CD8-positive, alpha-beta T cell (primary cell): ENCODE measurements at regions of chr9 and their contacts with region 1.

Region 1: DNA sequence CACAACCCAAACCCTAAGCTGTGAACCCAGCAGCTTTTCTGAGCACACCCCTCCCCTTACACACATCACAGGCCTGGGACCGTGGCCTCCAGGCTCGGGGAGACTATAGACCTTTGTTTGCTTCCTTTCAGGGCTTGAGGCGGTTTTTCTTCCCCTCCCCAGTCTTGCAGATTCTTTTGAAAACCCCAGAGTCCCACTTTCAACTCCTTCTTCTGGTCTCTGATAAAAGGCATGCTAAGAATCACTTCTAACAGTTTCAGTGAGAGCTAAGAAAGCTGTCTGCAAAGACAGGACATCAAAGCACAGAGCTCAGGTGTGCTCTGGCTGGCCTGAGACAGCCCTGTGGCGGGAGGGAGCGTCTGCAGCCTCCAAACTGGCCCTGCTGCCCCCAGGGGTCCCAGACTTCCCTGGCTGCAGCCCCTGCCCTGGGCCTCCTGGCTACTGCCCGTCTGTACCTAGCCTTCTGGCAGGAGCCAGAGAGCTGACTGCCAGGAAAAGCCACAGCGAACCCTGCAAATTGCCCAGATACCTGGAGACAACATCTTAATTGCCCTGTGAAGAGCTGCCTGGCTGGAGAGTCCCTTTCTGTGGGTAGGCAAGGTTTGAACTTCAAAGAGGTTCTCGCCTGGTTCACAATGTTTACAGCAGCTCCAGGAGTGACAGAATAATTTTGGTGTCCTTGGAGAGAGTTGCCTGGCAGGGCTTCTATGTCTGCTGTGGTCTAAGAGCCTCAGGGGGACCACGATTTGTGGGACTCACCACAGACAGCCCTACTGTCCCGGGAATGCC is 139.0 kb downstream of the GADD45G start:
- DNase-seq: peak; percentile 26 to 86 (median 55)
- ATAC-seq: peak; percentile 82
- H3K4me3 ChIP-seq: peak overlapping the region in 1 of 2 experiments; percentile 28
- H3K4me3 Mint-ChIP-seq: peak overlapping the region; percentile 61
- H3K27ac ChIP-seq: peak overlapping the region in 1 of 2 experiments; percentile 40
- H3K27ac Mint-ChIP-seq: peak overlapping the region; percentile 61
- H3K4me1 ChIP-seq: peaks cover 70% of the 10 kb centered on the region
- H3K4me1 Mint-ChIP-seq: peaks cover 80% of the 10 kb centered on the region
- H3K27me3 ChIP-seq: no peaks in the 10 kb centered on the region
- H3K27me3 Mint-ChIP-seq: no peaks in the 10 kb centered on the region
- CTCF ChIP-seq: no peak

Region 2: GRCh38 chr9:89690334-89690912 is 53.3 kb before region 1 on chr9:
- CTCF ChIA-PET with region 1: no interaction called
- POLR2A ChIA-PET with region 1: no interaction called
- intact Hi-C with region 1: loop called in 1 of 2 experiments (anchors 10 kb)
- DNase-seq: peak in 1 of 9 experiments; percentile 17
- ATAC-seq: peak; percentile 20
- H3K4me3 ChIP-seq: no peak overlapping the region
- H3K4me3 Mint-ChIP-seq: no peak overlapping the region
- H3K27ac ChIP-seq: no peak overlapping the region
- H3K27ac Mint-ChIP-seq: no peak overlapping the region
- H3K4me1 ChIP-seq: no peaks in the 10 kb centered on the region
- H3K4me1 Mint-ChIP-seq: peaks cover 7% of the 10 kb centered on the region
- H3K27me3 ChIP-seq: no peaks in the 10 kb centered on the region
- H3K27me3 Mint-ChIP-seq: no peaks in the 10 kb centered on the region
- CTCF ChIP-seq: no peak

Region 3: GRCh38 chr9:89701221-89701798 is 42.5 kb before region 1 on chr9:
- CTCF ChIA-PET with region 1: no interaction called
- POLR2A ChIA-PET with region 1: no interaction called
- intact Hi-C with region 1: loop called (anchors 5 to 10 kb)
- DNase-seq: peak in 8 of 9 experiments; percentile 17 to 91 (median 42)
- ATAC-seq: peak; percentile 91
- H3K4me3 ChIP-seq: peak overlapping the region in 1 of 2 experiments; percentile 4
- H3K4me3 Mint-ChIP-seq: peak overlapping the region; percentile 49
- H3K27ac ChIP-seq: no peak overlapping the region
- H3K27ac Mint-ChIP-seq: no peak overlapping the region
- H3K4me1 ChIP-seq: peaks cover 16% of the 10 kb centered on the region
- H3K4me1 Mint-ChIP-seq: peaks cover 19% of the 10 kb centered on the region
- H3K27me3 ChIP-seq: no peaks in the 10 kb centered on the region
- H3K27me3 Mint-ChIP-seq: no peaks in the 10 kb centered on the region
- CTCF ChIP-seq: no peak